ENCODE measurements at regions of chr11 and their contacts with region 1.

Region 1: GRCh38 chr11:78416305-78417178 is 1.1 kb downstream of the GAB2 start:
- DNase-seq: peak; percentile 92 to 95
- ATAC-seq: peak; percentile 87
- H3K4me3 ChIP-seq: peak overlapping the region; percentile 95 to 100
- H3K27ac ChIP-seq: peak overlapping the region; percentile 92 to 100
- H3K4me1 ChIP-seq: no peaks in the 10 kb centered on the region
- H3K27me3 ChIP-seq: no peaks in the 10 kb centered on the region

Region 2: DNA sequence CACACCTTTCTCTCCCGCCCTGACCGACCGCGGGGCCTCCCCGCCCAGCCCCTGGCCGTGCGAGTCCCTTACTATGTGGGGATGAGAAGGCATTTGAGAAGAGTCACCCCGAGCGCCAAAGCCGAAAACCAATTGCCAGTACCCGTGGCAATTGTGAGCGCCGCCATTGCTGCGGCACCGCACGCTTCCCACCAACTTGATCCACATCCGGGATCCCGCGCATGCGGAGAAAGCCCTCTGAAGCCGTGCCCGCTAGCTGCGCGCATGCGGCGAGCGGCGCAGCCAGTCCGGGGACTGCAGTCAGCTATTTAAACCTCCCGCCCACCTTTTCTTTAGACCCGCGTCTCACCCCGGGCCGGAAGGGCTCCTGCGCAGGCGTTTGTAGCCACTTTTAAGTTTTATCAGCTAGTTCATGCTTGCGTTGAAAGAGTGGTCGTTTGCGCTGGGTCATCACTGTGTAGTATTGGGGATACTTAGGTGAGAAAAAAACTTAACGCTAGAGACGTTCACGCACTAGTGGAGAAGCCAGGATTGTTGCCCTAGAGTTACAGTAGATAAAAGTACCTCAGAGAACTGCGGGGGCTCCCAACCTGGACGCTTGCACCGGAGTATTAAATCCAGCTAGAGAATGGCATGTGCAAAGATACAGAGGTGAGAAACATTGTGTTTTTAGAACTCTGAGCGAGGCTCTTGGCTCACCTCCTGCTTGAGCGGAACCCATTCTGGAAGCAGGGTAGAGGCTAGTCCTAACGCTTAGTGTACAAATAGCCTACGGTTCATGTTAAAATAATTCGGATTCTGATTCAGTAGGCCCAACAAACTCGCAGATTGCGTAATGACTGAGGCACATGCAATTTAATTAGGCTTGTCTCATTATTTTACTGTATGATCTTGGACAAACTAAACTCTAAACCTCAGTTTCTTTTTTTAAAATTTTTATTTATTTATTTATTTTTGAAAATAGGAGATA is 276.8 kb before region 1 on chr11 and contains the start of gene ALG8:
- intact Hi-C with region 1: loop called in 1 of 2 experiments (anchors 5 kb)
- DNase-seq: peak; percentile 97 to 99
- ATAC-seq: peak; percentile 98
- H3K4me3 ChIP-seq: peak within 1 kb of the TSS; percentile 69 to 81
- H3K27ac ChIP-seq: peak within 1 kb of the TSS in 1 of 2 donors; percentile 9
- H3K4me1 ChIP-seq: no peaks in the 10 kb centered on the region
- H3K27me3 ChIP-seq: no peaks in the 10 kb centered on the region
- total RNA-seq, gene ALG8: 22.2 to 23.6 TPM

Region 3: GRCh38 chr11:78149646-78150045 is 266.9 kb before region 1 on chr11:
- intact Hi-C with region 1: loop called (anchors 5 kb)
- DNase-seq: peak in 1 of 2 donors; percentile 74
- ATAC-seq: peak; percentile 81
- H3K4me3 ChIP-seq: no peak overlapping the region
- H3K27ac ChIP-seq: no peak overlapping the region
- H3K4me1 ChIP-seq: no peaks in the 10 kb centered on the region
- H3K27me3 ChIP-seq: no peaks in the 10 kb centered on the region

Region 4: GRCh38 chr11:78188286-78189173 is 228.0 kb before region 1 on chr11 and contains the starts of genes KCTD21 and USP35:
- intact Hi-C with region 1: loop called in 1 of 2 experiments (anchors 5 kb)
- DNase-seq: peak; percentile 99
- ATAC-seq: peak; percentile 97
- H3K4me3 ChIP-seq: peak within 1 kb of the TSS; percentile 73 to 77
- H3K27ac ChIP-seq: peak within 1 kb of the TSS in 1 of 2 donors; percentile 58
- H3K4me1 ChIP-seq: peaks cover 0 to 5% of the 10 kb centered on the region in 2 donors
- H3K27me3 ChIP-seq: no peaks in the 10 kb centered on the region
- total RNA-seq, gene KCTD21: 14.0 to 16.1 TPM
- total RNA-seq, gene USP35: 26.8 to 28.0 TPM

Region 5: GRCh38 chr11:78228467-78228866 is 188.1 kb before region 1 on chr11:
- intact Hi-C with region 1: loop called (anchors 2 to 5 kb)
- DNase-seq: no peak
- ATAC-seq: peak; percentile 54
- H3K4me3 ChIP-seq: no peak overlapping the region
- H3K27ac ChIP-seq: no peak overlapping the region
- H3K4me1 ChIP-seq: peaks cover 3 to 6% of the 10 kb centered on the region in 2 donors
- H3K27me3 ChIP-seq: no peaks in the 10 kb centered on the region

Region 6: GRCh38 chr11:78310500-78310909 is 106.0 kb before region 1 on chr11:
- intact Hi-C with region 1: loop called in 1 of 2 experiments (anchors 2 kb)
- DNase-seq: peak; percentile 76 to 86
- ATAC-seq: peak; percentile 81
- H3K4me3 ChIP-seq: no peak overlapping the region
- H3K27ac ChIP-seq: peak overlapping the region in 1 of 2 donors; percentile 67
- H3K4me1 ChIP-seq: peaks cover 8 to 17% of the 10 kb centered on the region in 2 donors
- H3K27me3 ChIP-seq: no peaks in the 10 kb centered on the region

Region 7: DNA sequence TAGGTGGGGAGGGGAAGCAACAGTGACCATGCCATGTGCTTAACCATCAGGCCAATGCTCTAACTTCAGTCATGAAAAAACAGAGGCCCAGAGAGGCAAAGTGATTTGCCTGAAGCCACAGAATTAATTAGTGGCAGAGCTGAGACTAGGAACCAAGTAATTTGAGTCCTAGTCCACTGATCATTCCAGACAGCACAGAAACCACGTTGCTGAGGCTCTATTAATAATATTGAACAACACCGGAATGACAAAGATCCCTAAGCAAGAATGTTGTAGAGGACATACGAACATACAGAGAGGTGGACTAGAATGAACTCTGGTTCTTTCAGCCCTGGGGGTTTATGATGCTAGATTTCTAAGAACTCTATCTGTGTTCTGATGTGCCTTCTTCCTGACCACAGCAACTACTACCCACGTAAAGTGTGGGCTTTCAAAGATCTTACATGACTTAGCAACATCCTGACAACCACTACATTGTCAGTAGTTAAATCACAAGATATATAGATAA is 91.2 kb before region 1 on chr11:
- intact Hi-C with region 1: no loop called
- DNase-seq: no peak
- ATAC-seq: no peak
- H3K4me3 ChIP-seq: no peak overlapping the region
- H3K27ac ChIP-seq: no peak overlapping the region
- H3K4me1 ChIP-seq: no peaks in the 10 kb centered on the region
- H3K27me3 ChIP-seq: no peaks in the 10 kb centered on the region

Region 8: GRCh38 chr11:78397387-78397786 is 19.2 kb before region 1 on chr11:
- intact Hi-C with region 1: no loop called
- DNase-seq: no peak
- ATAC-seq: no peak
- H3K4me3 ChIP-seq: no peak overlapping the region
- H3K27ac ChIP-seq: no peak overlapping the region
- H3K4me1 ChIP-seq: peaks cover 6 to 8% of the 10 kb centered on the region in 2 donors
- H3K27me3 ChIP-seq: no peaks in the 10 kb centered on the region

Region 9: GRCh38 chr11:78564490-78565467 is 148.2 kb after region 1 on chr11:
- intact Hi-C with region 1: loop called (anchors 5 to 10 kb)
- DNase-seq: no peak
- ATAC-seq: peak; percentile 80
- H3K4me3 ChIP-seq: no peak overlapping the region
- H3K27ac ChIP-seq: no peak overlapping the region
- H3K4me1 ChIP-seq: peaks cover 3 to 4% of the 10 kb centered on the region in 2 donors
- H3K27me3 ChIP-seq: no peaks in the 10 kb centered on the region

Region 10: DNA sequence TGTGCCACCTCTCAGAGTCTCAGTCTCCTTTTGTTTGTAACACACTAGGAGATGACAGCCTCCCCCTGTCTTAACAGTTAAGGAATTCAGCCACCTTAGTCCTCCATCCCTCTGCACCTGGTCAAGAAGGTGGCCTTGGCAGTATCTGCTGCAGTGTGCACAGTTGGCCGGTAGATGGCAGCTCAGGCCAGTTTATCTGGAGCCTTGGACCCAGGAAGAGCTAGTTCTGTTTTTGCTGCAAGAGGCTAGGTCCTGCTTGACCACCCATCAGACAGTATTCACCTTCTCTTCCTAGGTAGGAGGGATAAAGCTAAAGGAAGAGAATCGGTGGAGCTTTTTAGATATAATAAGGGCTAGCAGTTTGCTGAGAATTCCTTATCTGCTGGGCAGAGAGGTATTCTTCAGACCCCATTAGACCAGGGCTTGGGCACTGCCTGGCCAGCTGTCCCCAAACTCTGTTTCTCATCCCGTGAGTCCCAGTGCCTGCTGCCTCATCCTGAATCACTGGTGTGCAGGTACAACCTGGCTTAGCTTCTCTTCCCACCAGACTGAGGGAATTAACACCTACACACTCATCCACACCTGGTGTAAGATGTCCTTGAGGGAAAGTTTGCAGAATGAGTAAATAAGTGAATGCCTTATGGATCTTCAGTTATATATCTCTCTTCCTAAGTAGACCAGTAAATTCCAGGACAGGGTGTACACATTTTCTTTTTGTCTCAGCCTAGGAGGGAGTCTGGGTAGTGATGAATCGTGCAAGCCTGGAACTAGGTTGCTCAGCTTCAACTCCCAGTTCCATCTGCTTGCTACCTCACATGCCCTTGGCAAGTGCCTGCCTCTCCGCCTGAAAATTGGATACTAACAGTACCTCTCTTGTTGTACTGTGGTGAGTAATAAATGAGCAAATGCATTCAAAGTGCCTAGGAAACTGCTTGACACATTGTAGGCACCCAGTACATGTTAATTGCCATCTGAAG is 229.0 kb after region 1 on chr11:
- intact Hi-C with region 1: no loop called
- DNase-seq: peak; percentile 69 to 88
- ATAC-seq: peak; percentile 87
- H3K4me3 ChIP-seq: no peak overlapping the region
- H3K27ac ChIP-seq: no peak overlapping the region
- H3K4me1 ChIP-seq: no peaks in the 10 kb centered on the region
- H3K27me3 ChIP-seq: no peaks in the 10 kb centered on the region

Measured in aorta (tissue), 5 donors.